Activated CD4-positive, alpha-beta T cell treated with anti-CD3 and anti-CD28 coated beads, Interleukin-2, amount 10 ng/mL, durations not matched to agents 24 days and 14 days (primary cell): ENCODE measurements at regions of chr20 and their contacts with region 1.

Region 1: GRCh38 chr20:45406259-45407066 is 1.6 kb upstream of the DBNDD2 start:
- DNase-seq: peak; percentile 82
- H3K4me3 Mint-ChIP-seq: peak overlapping the region; percentile 81
- H3K27ac Mint-ChIP-seq: peak overlapping the region; percentile 76
- H3K4me1 Mint-ChIP-seq: peaks cover 16% of the 10 kb centered on the region
- H3K27me3 Mint-ChIP-seq: peaks cover 13% of the 10 kb centered on the region

Region 2: DNA sequence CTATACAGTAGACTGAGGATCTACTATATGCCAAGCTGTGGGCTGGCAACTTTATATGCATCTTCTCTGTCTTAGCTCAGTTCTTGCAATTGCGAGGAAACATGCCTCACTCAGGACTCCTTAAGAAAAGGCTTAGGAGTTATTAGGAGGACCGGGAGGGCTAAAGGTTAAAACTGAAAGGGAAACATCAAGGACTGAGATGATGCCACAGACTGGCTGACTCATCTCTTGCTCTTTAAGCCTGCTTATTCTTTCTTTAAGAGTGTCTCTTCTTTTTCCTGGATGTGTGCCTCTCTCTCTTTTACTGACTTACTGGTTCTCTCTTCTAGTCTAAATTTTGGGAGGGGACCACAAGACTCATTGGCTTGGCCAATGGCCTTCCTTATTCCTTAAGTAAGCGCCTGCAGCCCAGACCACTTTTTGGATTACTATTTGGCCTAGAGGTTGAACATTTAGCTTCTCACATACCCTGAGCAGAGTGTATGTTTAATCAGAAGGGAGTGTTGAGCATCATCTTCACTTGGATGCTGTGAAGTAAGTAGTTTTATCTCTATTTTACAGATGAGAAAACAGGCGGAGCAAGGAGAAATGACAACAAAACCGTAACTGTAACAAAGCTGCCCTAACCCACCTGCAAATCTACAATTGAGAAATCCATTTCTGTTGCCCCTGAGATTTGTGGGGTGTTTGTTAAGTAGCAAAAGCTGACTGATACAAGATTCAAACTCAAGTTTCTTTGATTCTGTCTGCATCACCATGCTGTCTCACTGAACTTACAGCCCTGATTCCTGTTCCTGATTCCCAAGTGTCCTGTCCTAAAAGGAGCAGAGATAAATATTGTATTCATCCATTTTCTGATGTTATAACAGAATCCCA is 51.0 kb before region 1 on chr20:
- intact Hi-C with region 1: loop called (anchors 2 kb)
- DNase-seq: peak; percentile 76
- H3K4me3 Mint-ChIP-seq: peak overlapping the region; percentile 82
- H3K27ac Mint-ChIP-seq: peak overlapping the region; percentile 96
- H3K4me1 Mint-ChIP-seq: peaks cover 57% of the 10 kb centered on the region
- H3K27me3 Mint-ChIP-seq: no peaks in the 10 kb centered on the region

Region 3: GRCh38 chr20:45436732-45437391 is 30.4 kb after region 1 on chr20:
- intact Hi-C with region 1: no loop called
- DNase-seq: peak; percentile 96
- H3K4me3 Mint-ChIP-seq: peak overlapping the region; percentile 84
- H3K27ac Mint-ChIP-seq: no peak overlapping the region
- H3K4me1 Mint-ChIP-seq: peaks cover 17% of the 10 kb centered on the region
- H3K27me3 Mint-ChIP-seq: peaks cover 2% of the 10 kb centered on the region